Calu3 (cell line): ENCODE measurements at regions of chr16 and their contacts with region 1.

Region 1: GRCh38 chr16:51971184-51971583 is 575.8 kb downstream of the TOX3 start:
- DNase-seq: peak; percentile 39
- H3K4me3 Mint-ChIP-seq: no peak overlapping the region
- H3K27ac Mint-ChIP-seq: no peak overlapping the region
- H3K4me1 Mint-ChIP-seq: no peaks in the 10 kb centered on the region
- H3K27me3 Mint-ChIP-seq: peaks cover 9% of the 10 kb centered on the region
- CTCF ChIP-seq: peak; percentile 55

Region 2: DNA sequence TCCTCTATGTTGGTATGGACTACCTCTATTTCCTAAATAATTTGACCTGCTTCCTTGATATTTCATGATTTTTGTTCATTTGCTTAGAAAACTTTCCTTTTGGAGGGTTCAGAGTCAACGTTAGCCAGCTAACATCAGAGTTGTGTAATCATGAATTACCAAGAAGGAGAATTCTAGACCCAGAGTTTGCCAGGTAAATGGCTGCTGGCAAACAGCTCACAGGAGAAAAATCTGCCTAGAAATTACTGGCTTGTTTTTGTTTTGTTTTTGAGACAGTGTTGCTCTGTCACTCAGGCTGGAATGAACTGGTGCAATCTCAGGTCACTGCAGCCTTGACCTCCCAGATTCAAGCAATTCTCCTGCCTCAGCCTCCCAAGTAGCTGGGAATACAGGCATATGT is 708.8 kb before region 1 on chr16:
- CTCF ChIA-PET with region 1: no interaction called
- intact Hi-C with region 1: loop called (anchors 5 kb)
- DNase-seq: no peak
- H3K4me3 Mint-ChIP-seq: no peak overlapping the region
- H3K27ac Mint-ChIP-seq: no peak overlapping the region
- H3K4me1 Mint-ChIP-seq: no peaks in the 10 kb centered on the region
- H3K27me3 Mint-ChIP-seq: peaks cover 57% of the 10 kb centered on the region
- CTCF ChIP-seq: no peak

Region 3: GRCh38 chr16:51989637-51990230 is 18.6 kb after region 1 on chr16:
- CTCF ChIA-PET with region 1: no interaction called
- intact Hi-C with region 1: no loop called
- DNase-seq: no peak
- H3K4me3 Mint-ChIP-seq: no peak overlapping the region
- H3K27ac Mint-ChIP-seq: no peak overlapping the region
- H3K4me1 Mint-ChIP-seq: peaks cover 44% of the 10 kb centered on the region
- H3K27me3 Mint-ChIP-seq: no peaks in the 10 kb centered on the region
- CTCF ChIP-seq: no peak